ENCODE measurements at regions of chr5 and their contacts with region 1.

Region 1: DNA sequence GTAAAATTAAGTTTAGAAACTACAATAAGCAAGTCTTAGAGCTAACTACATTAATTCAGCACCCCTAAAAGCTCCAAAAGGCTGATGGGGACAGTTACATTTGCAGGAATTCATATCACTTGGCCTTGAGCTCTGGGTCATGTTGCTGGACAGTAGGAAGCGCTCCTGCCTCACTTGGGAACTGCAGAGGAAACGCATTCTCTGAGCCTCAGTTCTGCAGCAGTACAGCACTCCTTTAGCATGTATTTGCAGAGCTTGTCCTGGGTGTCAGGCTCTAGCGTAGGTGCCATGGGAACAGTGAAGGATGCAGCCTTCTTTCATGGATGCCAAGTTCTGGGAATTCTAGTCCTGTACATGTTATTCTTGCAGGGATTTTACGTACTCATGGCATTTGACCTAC is 710.4 kb downstream of the IRX1 start:
- DNase-seq: peak; percentile 7
- H3K4me3 Mint-ChIP-seq: no peak overlapping the region
- H3K27ac Mint-ChIP-seq: no peak overlapping the region
- H3K4me1 Mint-ChIP-seq: no peaks in the 10 kb centered on the region
- H3K27me3 Mint-ChIP-seq: no peaks in the 10 kb centered on the region
- CTCF ChIP-seq: no peak

Region 2: GRCh38 chr5:4511996-4512662 is 206.1 kb after region 1 on chr5:
- CTCF ChIA-PET with region 1: no interaction called
- POLR2A ChIA-PET with region 1: no interaction called
- intact Hi-C with region 1: loop called (anchors 5 kb)
- DNase-seq: peak; percentile 54
- H3K4me3 Mint-ChIP-seq: peak overlapping the region; percentile 69
- H3K27ac Mint-ChIP-seq: no peak overlapping the region
- H3K4me1 Mint-ChIP-seq: peaks cover 6% of the 10 kb centered on the region
- H3K27me3 Mint-ChIP-seq: no peaks in the 10 kb centered on the region
- CTCF ChIP-seq: peak; percentile 61

Measured in MCF 10A (cell line).